ENCODE measurements at regions of chr7 and their contacts with region 1.

Region 1: DNA sequence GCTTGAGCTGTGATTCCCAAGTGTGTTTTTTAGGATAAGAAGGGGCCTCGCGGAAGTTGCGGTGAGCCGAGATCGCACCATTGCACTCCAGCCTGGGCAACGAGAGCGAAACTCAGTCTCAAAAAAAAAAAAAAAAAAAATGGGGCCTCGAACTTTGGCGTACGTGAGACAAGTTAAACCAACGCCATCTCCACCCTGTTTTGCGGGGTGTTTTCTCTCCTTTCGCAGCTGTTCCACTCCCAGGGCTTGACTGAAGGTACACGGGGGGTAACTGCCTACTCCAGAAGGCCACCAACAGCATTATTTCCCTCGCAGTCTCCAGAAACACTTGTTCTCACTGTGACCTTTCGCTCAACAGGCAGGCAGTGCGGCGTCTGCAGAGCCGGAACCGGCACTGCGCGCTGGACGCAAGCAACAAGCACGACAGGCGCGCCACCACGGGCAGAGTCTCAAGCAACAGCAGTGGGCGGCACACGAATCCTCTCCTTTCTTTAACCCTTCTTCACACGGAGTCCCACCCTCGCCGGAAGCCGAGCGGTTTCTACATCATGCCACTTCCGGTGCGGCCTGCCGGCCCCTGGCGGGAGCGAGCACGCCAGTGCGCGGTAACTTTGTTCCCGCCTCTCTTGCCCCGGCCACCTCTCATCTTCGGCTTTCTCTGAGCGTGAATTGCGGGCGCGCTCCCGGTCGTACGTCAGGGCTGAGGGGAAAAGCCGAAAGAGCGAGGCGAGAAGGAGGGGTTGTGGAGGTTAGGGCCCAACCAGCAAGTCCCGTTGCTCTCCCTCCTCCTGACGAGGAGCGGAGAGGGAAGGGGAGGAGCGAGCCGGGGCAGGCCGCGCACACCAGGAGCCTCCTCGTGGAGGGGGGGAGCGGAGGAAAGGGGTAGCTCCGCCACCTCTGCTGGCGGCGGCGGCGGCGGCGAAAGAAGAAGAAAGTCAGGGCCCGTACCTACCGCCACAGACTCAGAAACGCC is 814 bp upstream of the CDK13 start:
- DNase-seq: peak; percentile 98
- H3K4me3 Mint-ChIP-seq: peak overlapping the region; percentile 95
- H3K27ac Mint-ChIP-seq: peak overlapping the region; percentile 99
- H3K4me1 Mint-ChIP-seq: peaks cover 48% of the 10 kb centered on the region
- H3K27me3 Mint-ChIP-seq: peaks cover 6% of the 10 kb centered on the region

Region 2: DNA sequence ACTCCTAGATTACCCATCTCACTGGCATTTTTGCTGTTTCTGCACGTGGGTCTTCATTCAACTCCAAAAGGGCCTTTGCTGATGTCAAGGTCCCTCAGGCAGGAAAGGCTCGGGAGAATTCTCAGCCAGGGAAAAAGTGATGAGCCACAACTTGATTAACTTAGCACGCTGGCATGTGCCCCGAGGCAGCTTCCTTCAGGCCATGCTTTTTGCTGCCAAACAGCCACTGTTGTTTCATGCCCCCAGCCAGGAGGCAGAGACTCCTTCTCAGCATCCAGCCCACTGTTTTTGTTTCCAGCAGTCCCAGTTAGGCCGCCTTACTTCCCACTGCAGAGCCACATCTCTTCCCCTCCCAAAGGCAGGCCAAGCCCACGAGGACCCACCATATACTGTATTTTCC is 649.5 kb before region 1 on chr7:
- intact Hi-C with region 1: no loop called
- DNase-seq: no peak
- H3K4me3 Mint-ChIP-seq: no peak overlapping the region
- H3K27ac Mint-ChIP-seq: no peak overlapping the region
- H3K4me1 Mint-ChIP-seq: no peaks in the 10 kb centered on the region
- H3K27me3 Mint-ChIP-seq: peaks cover 6% of the 10 kb centered on the region

Region 3: GRCh38 chr7:39566023-39566921 is 383.0 kb before region 1 on chr7 and contains the start of gene YAE1:
- intact Hi-C with region 1: loop called (anchors 1 kb)
- DNase-seq: peak; percentile 73
- H3K4me3 Mint-ChIP-seq: peak within 1 kb of the TSS; percentile 99
- H3K27ac Mint-ChIP-seq: peak within 1 kb of the TSS; percentile 91
- H3K4me1 Mint-ChIP-seq: peaks cover 21% of the 10 kb centered on the region
- H3K27me3 Mint-ChIP-seq: peaks cover 9% of the 10 kb centered on the region
- total RNA-seq, gene YAE1: 10.4 and 12.1 TPM in 2 replicates

Region 4: DNA sequence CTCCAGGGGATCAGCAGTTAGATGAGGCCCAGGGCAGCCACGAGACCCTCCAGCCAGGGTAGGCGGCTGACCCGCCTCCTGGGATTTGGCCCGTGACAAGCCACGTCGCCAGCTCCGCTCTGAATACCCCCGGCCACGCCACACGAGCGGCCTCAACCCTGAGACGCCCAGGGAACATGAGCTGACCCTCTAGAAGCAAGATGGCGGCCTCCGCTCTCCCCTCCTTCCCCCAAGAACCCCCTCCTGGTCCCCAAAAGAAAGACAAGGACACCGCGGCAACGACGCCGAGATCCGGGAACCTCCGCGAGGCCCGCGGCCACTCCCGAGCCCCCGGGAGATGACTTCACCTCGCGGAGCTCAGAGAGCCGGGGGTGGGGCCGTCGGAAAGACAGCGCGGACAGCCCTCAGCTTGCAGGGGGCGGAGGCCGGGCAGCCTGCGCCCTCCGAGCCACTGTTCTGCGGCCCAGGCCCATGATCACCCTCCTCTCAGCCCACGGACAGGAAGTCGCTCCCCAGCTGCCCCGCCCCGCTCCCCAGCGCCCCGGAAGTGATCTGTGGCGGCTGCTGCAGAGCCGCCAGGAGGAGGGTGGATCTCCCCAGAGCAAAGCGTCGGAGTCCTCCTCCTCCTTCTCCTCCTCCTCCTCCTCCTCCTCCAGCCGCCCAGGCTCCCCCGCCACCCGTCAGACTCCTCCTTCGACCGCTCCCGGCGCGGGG is 326.1 kb before region 1 on chr7 and contains the start of gene RALA:
- intact Hi-C with region 1: loop called (anchors 1 kb)
- DNase-seq: peak; percentile 87
- H3K4me3 Mint-ChIP-seq: peak within 1 kb of the TSS; percentile 95
- H3K27ac Mint-ChIP-seq: peak within 1 kb of the TSS; percentile 97
- H3K4me1 Mint-ChIP-seq: peaks cover 52% of the 10 kb centered on the region
- H3K27me3 Mint-ChIP-seq: peaks cover 7% of the 10 kb centered on the region
- total RNA-seq, gene RALA: 38.8 and 43.4 TPM in 2 replicates

Region 5: GRCh38 chr7:39894904-39895303 is 54.3 kb before region 1 on chr7:
- intact Hi-C with region 1: loop called (anchors 5 kb)
- DNase-seq: no peak
- H3K4me3 Mint-ChIP-seq: no peak overlapping the region
- H3K27ac Mint-ChIP-seq: no peak overlapping the region
- H3K4me1 Mint-ChIP-seq: no peaks in the 10 kb centered on the region
- H3K27me3 Mint-ChIP-seq: peaks cover 4% of the 10 kb centered on the region

Region 6: GRCh38 chr7:39987476-39988347 is 38.5 kb after region 1 on chr7:
- intact Hi-C with region 1: loop called (anchors 2 kb)
- DNase-seq: no peak
- H3K4me3 Mint-ChIP-seq: no peak overlapping the region
- H3K27ac Mint-ChIP-seq: peak overlapping the region; percentile 30
- H3K4me1 Mint-ChIP-seq: peaks cover 30% of the 10 kb centered on the region
- H3K27me3 Mint-ChIP-seq: no peaks in the 10 kb centered on the region

Region 7: DNA sequence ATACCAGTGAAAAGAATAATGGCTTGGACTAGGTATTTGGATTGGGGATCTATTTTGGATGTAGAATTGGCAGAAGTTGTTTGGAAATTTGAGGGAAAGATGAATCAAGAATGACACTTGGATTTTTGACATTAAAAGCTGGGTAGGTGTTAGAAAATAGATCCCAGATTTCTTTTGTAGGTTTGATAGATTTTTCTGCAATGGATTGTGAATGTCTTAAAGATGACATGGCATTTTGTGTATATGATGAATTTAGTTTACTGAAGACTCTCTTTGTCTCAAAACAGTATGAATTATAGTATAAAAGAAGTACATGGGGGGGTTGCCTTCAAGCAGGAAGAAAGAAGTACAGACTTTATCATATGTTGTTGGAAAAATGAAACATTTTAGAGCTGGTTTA is 109.4 kb after region 1 on chr7:
- intact Hi-C with region 1: no loop called
- DNase-seq: no peak
- H3K4me3 Mint-ChIP-seq: no peak overlapping the region
- H3K27ac Mint-ChIP-seq: no peak overlapping the region
- H3K4me1 Mint-ChIP-seq: peaks cover 4% of the 10 kb centered on the region
- H3K27me3 Mint-ChIP-seq: no peaks in the 10 kb centered on the region

Region 8: DNA sequence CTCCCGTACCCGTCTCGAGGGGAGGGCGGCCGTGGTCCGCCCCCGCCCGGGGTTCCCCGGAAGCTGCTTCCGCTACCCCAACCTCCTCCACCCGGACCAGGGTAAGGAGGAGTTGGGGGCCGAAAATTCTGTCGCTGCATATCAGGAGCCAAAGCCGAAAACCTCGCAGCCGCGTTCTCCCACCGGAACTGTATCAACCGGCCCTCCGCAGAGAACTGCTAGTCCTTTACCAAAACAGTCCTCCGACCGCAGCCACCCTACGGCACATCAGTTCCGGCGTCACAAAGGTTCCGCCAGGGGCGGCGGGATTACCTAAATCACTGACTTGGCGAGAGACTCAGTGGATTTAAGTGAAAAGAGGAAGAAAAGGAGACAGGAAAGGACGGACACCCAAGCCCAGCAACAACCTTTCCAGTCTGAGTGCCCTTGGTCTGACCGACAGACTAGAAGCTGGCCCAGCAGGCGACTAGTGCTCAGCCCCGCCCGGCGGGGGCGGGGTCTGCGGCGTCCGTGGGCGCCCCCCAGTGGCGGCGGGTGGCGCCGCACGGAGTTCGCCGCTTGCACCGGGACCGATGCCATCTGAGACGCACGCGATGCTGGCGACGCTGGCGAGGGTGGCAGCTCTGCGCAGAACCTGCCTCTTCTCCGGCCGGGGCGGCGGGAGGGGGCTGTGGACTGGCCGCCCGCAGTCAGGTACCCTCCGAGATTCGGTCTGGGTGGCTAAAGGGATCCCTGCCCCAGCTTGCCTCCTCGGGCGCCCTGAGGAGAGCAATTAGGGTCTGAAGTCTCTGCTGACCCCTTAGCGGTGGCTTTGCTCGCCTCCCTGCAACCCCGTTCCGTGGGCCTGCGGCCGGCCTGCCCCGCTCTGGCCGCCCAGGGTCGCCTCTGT is 185.4 kb after region 1 on chr7 and contains the starts of genes MPLKIP and SUGCT:
- intact Hi-C with region 1: loop called (anchors 1 kb)
- DNase-seq: peak; percentile 80
- H3K4me3 Mint-ChIP-seq: peak within 1 kb of the TSS; percentile 91
- H3K27ac Mint-ChIP-seq: peak within 1 kb of the TSS; percentile 96
- H3K4me1 Mint-ChIP-seq: peaks cover 19% of the 10 kb centered on the region
- H3K27me3 Mint-ChIP-seq: peaks cover 13% of the 10 kb centered on the region
- total RNA-seq, gene MPLKIP: 36.0 and 36.3 TPM in 2 replicates
- total RNA-seq, gene SUGCT: 0.93 TPM in 1 of 2 replicates, not detected in the other

Measured in activated T-helper 1 cell treated with anti-CD3 and anti-CD28 coated beads, Interleukin-12 subunit alpha, Interleukin-12 subunit beta, Interleukin-2, Interleukin-4 antibody, amounts not matched to agents 30 ng/mL and 10 ng/mL and 1 ng/mL, durations not matched to agents 14 hours and 24 hours and 36 hours (primary cell).